CD8-positive, alpha-beta T cell (primary cell): ENCODE measurements at regions of chr7 and their contacts with region 1.

Region 1: DNA sequence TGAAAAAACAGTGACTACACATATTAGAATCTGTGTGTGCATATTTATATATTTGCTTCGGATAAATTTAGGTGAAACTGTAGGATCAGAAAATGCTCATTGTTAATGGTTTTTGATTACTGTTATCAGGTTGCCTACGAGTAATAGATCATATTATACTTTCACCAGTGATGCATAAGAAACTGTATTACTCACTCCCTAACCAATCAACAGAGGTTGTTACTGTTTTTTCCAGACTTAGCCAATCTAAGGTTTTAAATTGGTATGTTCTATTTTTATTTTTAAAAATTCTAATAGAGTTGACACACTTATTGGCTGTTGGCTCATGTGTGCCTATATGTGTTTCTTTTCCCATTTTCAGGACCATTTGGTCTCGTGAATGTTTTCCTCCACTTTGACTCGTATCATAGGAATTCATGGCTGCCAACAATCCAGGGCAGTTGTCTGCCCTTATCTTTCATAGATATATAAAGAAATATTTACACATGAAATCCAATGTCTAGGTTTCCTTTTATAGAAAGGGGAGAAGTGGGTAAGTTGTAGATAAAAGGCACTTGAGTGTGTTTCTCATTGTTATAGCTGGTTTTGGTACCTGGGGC is 59.2 kb downstream of the ANLN start:
- DNase-seq: no peak
- ATAC-seq: no peak
- H3K4me3 ChIP-seq: no peak overlapping the region
- H3K4me3 Mint-ChIP-seq: no peak overlapping the region
- H3K27ac ChIP-seq: no peak overlapping the region
- H3K27ac Mint-ChIP-seq: no peak overlapping the region
- H3K4me1 ChIP-seq: no peaks in the 10 kb centered on the region
- H3K4me1 Mint-ChIP-seq: no peaks in the 10 kb centered on the region
- H3K27me3 ChIP-seq: no peaks in the 10 kb centered on the region
- H3K27me3 Mint-ChIP-seq: no peaks in the 10 kb centered on the region
- CTCF ChIP-seq: no peak

Region 2: GRCh38 chr7:36468370-36469101 is 19.7 kb after region 1 on chr7:
- CTCF ChIA-PET with region 1: no interaction called
- POLR2A ChIA-PET with region 1: no interaction called
- intact Hi-C with region 1: loop called in 1 of 2 experiments (anchors 1 kb)
- DNase-seq: no peak
- ATAC-seq: no peak
- H3K4me3 ChIP-seq: no peak overlapping the region
- H3K4me3 Mint-ChIP-seq: no peak overlapping the region
- H3K27ac ChIP-seq: no peak overlapping the region
- H3K27ac Mint-ChIP-seq: no peak overlapping the region
- H3K4me1 ChIP-seq: no peaks in the 10 kb centered on the region
- H3K4me1 Mint-ChIP-seq: no peaks in the 10 kb centered on the region
- H3K27me3 ChIP-seq: no peaks in the 10 kb centered on the region
- H3K27me3 Mint-ChIP-seq: no peaks in the 10 kb centered on the region
- CTCF ChIP-seq: no peak